H1 (cell line): ENCODE measurements at regions of chr17 and their contacts with region 1.

Region 1: DNA sequence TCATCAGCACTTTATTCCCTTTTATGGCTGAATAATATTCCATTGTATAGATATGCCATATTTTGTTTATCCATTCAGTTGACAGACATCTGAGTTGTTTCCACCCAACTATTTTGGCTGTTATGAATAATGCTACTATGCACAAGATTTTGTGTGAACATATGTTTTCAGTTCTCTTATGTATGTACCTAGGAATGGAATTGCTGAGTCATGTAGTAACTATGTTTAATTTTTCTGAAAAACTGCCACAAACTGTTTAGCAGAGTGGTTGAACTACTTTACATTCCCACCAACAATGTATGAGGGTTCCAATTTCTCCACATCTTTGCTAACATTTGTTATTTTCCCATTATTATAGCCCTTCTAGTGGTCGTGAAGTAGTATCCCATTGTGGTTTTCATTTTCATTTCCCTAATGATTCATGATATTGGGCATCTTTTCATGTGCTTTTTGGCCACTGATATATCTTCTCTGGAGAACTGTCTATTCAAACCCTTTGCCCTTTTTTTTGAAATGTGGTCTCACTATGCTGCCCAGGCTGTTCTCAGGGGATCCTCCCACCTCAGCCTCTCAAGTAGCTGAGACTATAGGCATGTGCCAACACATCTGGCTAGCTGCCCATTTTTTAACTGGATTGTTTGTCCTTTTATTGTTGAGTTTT is 26.3 kb downstream of the SMURF2 start:
- DNase-seq: no peak
- H3K4me3 ChIP-seq: no peak overlapping the region
- H3K27ac ChIP-seq: no peak overlapping the region
- H3K4me1 ChIP-seq: no peaks in the 10 kb centered on the region
- H3K27me3 ChIP-seq: no peaks in the 10 kb centered on the region
- CTCF ChIP-seq: no peak
- EP300 ChIP-seq: no peak
- POLR2A ChIP-seq: no peak
- RAD21 ChIP-seq: no peak

Region 2: GRCh38 chr17:64599187-64599676 is 36.5 kb before region 1 on chr17:
- CTCF ChIA-PET with region 1: no interaction called
- POLR2A ChIA-PET with region 1: no interaction called
- DNase-seq: no peak
- H3K4me3 ChIP-seq: no peak overlapping the region
- H3K27ac ChIP-seq: no peak overlapping the region
- H3K4me1 ChIP-seq: no peaks in the 10 kb centered on the region
- H3K27me3 ChIP-seq: no peaks in the 10 kb centered on the region
- CTCF ChIP-seq: no peak
- EP300 ChIP-seq: no peak
- POLR2A ChIP-seq: no peak
- RAD21 ChIP-seq: no peak

Region 3: DNA sequence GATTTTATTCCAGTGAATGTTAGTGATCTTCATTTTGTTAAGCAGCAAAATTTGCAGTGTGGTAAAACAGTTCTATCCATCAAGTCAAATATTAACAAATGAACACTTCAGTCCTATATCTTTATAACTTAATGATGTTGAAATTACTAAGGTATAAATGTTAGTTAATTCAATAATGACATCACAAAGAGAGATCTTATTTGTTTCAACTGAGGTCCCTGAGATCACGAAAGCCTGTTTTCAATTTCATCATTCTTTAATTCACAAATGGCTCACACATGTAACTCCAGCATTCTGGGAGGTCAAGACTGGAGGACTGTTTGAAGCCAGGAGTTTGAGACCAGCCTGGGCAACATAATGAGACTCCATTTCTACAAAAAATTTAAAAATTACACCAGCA is 12.5 kb after region 1 on chr17:
- CTCF ChIA-PET with region 1: interaction called, 19 read pairs
- POLR2A ChIA-PET with region 1: no interaction called
- DNase-seq: no peak
- H3K4me3 ChIP-seq: no peak overlapping the region
- H3K27ac ChIP-seq: no peak overlapping the region
- H3K4me1 ChIP-seq: no peaks in the 10 kb centered on the region
- H3K27me3 ChIP-seq: no peaks in the 10 kb centered on the region
- CTCF ChIP-seq: no peak
- EP300 ChIP-seq: no peak
- POLR2A ChIP-seq: no peak
- RAD21 ChIP-seq: no peak

Region 4: GRCh38 chr17:64653325-64653984 is 17.7 kb after region 1 on chr17:
- CTCF ChIA-PET with region 1: interaction called, 19 read pairs
- POLR2A ChIA-PET with region 1: no interaction called
- DNase-seq: no peak
- H3K4me3 ChIP-seq: no peak overlapping the region
- H3K27ac ChIP-seq: no peak overlapping the region
- H3K4me1 ChIP-seq: no peaks in the 10 kb centered on the region
- H3K27me3 ChIP-seq: no peaks in the 10 kb centered on the region
- CTCF ChIP-seq: no peak
- EP300 ChIP-seq: no peak
- POLR2A ChIP-seq: no peak
- RAD21 ChIP-seq: no peak